ENCODE measurements at regions of chr4 and their contacts with region 1.

Region 1: GRCh38 chr4:39587881-39588280 is 50.8 kb downstream of the SMIM14 start:
- DNase-seq: no peak
- H3K4me3 Mint-ChIP-seq: no peak overlapping the region
- H3K27ac Mint-ChIP-seq: no peak overlapping the region
- H3K4me1 Mint-ChIP-seq: no peaks in the 10 kb centered on the region
- H3K27me3 Mint-ChIP-seq: no peaks in the 10 kb centered on the region

Region 2: GRCh38 chr4:39574946-39575345 is 12.9 kb before region 1 on chr4:
- CTCF ChIA-PET with region 1: no interaction called
- intact Hi-C with region 1: loop called (anchors 1 kb)
- DNase-seq: no peak
- H3K4me3 Mint-ChIP-seq: no peak overlapping the region
- H3K27ac Mint-ChIP-seq: no peak overlapping the region
- H3K4me1 Mint-ChIP-seq: no peaks in the 10 kb centered on the region
- H3K27me3 Mint-ChIP-seq: no peaks in the 10 kb centered on the region

Region 3: GRCh38 chr4:39609454-39609931 is 21.6 kb after region 1 on chr4:
- CTCF ChIA-PET with region 1: no interaction called
- intact Hi-C with region 1: no loop called
- DNase-seq: no peak
- H3K4me3 Mint-ChIP-seq: no peak overlapping the region
- H3K27ac Mint-ChIP-seq: no peak overlapping the region
- H3K4me1 Mint-ChIP-seq: peaks cover 6% of the 10 kb centered on the region
- H3K27me3 Mint-ChIP-seq: no peaks in the 10 kb centered on the region